Sciatic nerve (tissue), 2 donors: ENCODE measurements at regions of chr10 and their contacts with region 1.

Region 1: GRCh38 chr10:13741438-13741837 is 154.7 kb downstream of the PRPF18 start:
- DNase-seq: peak; percentile 13
- ATAC-seq: no peak

Region 2: GRCh38 chr10:13767676-13768178 is 26.3 kb after region 1 on chr10:
- intact Hi-C with region 1: loop called (anchors 1 kb)
- DNase-seq: no peak
- ATAC-seq: no peak